ENCODE measurements at regions of chr1 and their contacts with region 1.

Region 1: GRCh38 chr1:203996126-203996525 is 76.8 kb upstream of the SOX13 start:
- DNase-seq: peak in 9 of 10 donors; percentile 15 to 88 (median 37)

Region 2: GRCh38 chr1:203871107-203871875 is 124.8 kb before region 1 on chr1:
- intact Hi-C with region 1: loop called (anchors 5 kb)
- DNase-seq: peak in 5 of 10 donors; percentile 17 to 85 (median 52)

Region 3: GRCh38 chr1:204065174-204065985 is 69.3 kb after region 1 on chr1:
- intact Hi-C with region 1: loop called (anchors 2 kb)
- DNase-seq: peak in 6 of 10 donors; percentile 46 to 92 (median 70)

Region 4: DNA sequence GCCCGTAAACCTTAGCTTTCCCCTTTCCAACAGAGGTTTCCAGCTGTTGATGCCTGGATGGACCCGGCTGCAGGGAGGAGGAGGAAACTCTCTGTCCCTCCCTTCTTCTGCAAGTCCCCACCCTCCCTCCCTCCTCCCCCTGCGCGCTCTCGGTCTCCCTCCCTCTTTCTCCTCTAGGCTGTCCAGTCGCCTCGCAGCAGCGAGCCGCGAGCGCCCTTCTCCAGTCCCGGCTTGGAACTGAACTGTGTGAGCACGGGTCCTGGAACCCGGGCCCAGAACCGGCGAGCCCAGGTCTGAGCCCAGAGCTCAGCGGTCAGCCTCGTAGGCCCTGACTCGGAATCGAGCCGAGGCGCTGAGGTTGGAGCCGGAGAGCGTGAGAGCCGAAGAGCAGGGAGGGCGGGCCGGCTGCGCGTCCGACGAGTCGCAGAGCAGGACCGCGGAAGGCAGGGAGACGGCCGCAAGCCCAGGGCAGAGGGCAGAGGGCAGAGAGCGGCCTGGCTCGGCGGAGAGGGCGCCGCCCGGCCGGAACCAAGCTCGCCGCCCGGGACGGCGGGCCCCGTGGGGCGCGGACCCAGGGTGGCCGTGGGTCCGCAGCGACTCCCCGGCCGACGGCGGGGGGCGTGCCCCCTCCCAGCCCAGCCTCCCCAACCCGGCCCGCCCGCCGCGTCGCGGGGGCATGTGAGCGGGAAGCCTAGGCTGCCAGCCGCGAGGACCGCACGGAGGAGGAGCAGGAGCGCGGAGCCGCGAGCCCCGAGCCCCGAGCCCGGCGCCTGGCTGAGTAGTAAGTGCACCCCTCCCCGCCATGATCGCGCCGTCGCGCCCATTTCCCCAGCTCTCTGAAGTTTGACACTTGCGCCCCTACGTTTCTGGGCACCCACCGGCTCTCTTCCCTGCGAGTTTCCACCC is 77.1 kb after region 1 on chr1 and contains the start of gene SOX13:
- intact Hi-C with region 1: loop called (anchors 2 kb)
- DNase-seq: peak; percentile 79 to 98 (median 86)